MCF 10A (cell line): ENCODE measurements at regions of chr5 and their contacts with region 1.

Region 1: GRCh38 chr5:176415952-176416924 is at the start of gene CLTB:
- DNase-seq: peak; percentile 91
- H3K4me3 Mint-ChIP-seq: peak within 1 kb of the TSS; percentile 83
- H3K27ac Mint-ChIP-seq: peak within 1 kb of the TSS; percentile 73
- H3K4me1 Mint-ChIP-seq: peaks cover 51% of the 10 kb centered on the region
- H3K27me3 Mint-ChIP-seq: no peaks in the 10 kb centered on the region
- CTCF ChIP-seq: peak; percentile 90
- total RNA-seq, gene CLTB: 333 and 339 TPM in 2 replicates

Region 2: DNA sequence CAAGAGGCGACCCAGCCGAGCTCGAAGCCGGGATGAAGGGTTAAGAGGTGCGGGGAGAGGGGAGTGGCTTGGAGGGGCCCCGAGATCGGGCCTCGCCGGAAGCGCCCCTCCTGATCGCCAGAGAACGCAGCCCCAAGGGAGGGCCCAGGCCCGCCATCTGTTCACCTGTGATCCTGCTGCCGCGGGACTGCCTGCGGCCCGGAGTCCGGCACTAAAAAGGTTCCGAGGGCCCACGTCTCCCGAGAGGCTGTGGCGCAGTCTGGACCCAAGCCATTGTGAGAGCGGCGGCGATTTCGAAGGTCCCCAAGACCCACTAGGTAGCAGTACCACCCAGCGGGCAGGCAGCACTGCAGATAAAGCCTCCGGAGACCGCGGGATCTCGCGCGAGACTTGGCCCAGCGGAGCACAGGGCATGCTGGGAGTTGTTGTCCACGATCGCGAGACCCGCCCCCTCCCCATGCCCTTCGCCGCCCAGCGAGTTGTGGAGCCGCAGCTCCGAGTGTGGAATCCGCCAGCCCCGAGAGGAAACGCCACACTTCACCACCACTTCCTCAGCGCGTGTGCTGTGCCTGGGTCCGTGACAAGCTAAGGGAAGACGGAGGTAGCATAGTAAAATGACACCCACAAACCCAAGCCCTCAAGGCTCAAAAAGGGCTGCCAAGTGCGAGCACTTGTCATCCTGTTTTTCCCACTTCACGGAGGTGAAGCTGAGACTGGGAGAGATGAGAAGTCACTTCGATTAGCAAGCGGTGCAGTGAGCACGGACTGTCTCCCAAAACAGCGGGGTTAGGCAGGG is 54.6 kb before region 1 on chr5 and contains the start of gene KIAA1191:
- CTCF ChIA-PET with region 1: interaction called, 3 read pairs
- POLR2A ChIA-PET with region 1: interaction called, 4 read pairs
- intact Hi-C with region 1: loop called (anchors 2 kb)
- DNase-seq: peak; percentile 94
- H3K4me3 Mint-ChIP-seq: peak within 1 kb of the TSS; percentile 98
- H3K27ac Mint-ChIP-seq: peak within 1 kb of the TSS; percentile 97
- H3K4me1 Mint-ChIP-seq: peaks cover 18% of the 10 kb centered on the region
- H3K27me3 Mint-ChIP-seq: no peaks in the 10 kb centered on the region
- CTCF ChIP-seq: peak; percentile 25
- total RNA-seq, gene KIAA1191: 83.8 and 92.0 TPM in 2 replicates

Region 3: DNA sequence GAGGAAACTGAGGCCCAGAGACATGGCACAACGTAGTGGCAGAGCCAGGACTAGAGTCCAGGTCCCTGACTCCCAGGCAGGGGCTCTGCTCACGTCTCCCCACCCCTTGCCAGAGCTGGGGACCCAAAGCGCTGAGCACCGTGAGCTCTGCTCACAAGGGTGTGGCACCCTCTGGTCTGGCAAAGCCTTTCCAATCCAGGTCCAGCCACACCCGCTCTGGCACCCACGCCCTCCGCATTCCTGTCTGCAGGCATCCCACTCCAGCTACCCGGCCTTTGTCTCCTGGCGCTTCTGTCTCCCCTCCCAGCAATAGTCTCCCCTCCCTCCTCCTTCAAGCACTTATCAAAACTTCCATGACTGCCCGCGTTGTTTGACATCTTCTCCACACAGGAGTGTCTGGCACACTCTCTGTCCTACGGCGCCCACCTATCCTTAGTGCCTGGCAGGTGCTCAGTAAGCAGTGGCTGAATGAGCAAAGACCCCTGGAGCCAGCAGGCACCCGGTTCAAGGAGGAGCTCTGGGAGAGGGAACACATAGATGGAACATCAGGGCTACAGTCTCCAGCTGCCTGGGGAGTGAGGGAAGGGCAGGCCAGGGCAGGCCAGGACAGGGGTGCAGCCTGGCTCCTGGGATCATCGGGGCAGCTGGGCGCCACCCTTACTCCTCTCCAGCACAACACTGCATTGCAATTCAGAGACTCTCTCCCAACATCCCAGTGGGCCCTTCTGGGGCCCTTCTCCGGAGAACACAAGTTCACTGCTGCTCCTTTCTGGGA is 15.7 kb before region 1 on chr5:
- CTCF ChIA-PET with region 1: interaction called, 6 read pairs
- POLR2A ChIA-PET with region 1: interaction called, 31 read pairs
- intact Hi-C with region 1: no loop called
- DNase-seq: peak; percentile 48
- H3K4me3 Mint-ChIP-seq: peak overlapping the region; percentile 38
- H3K27ac Mint-ChIP-seq: peak overlapping the region; percentile 78
- H3K4me1 Mint-ChIP-seq: peaks cover 29% of the 10 kb centered on the region
- H3K27me3 Mint-ChIP-seq: no peaks in the 10 kb centered on the region
- CTCF ChIP-seq: no peak

Region 4: DNA sequence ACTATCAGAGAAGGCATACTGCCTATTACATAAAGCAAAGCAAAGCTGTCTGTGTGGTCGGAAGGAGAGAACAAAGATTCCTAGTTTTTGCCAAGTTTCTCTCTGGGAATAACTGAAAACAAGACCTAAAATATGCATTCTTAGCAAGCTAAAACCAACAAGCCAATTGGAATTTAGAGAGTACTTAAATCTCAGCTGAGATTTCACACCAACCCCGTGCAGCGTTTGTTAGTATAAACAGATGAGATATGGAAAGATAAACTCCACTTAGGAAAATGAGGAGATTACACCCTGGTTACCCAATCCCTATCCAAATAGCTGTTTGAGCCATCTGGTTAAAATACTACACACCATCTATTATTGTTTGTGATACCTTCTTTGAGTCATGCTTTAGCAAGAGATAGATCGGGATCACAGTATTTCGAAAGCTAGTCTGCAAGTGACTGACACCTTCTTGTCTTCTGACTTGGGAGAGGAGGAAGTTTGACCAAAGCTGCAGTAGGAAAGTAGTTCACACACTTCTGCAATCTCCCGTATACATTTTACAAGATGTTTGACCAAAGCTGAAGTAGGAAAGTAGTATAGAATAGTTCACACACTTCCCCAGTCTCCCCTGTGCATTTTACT is 50.1 kb after region 1 on chr5:
- CTCF ChIA-PET with region 1: interaction called, 4 read pairs
- POLR2A ChIA-PET with region 1: interaction called, 34 read pairs
- intact Hi-C with region 1: no loop called
- DNase-seq: peak; percentile 84
- H3K4me3 Mint-ChIP-seq: peak overlapping the region; percentile 11
- H3K27ac Mint-ChIP-seq: peak overlapping the region; percentile 24
- H3K4me1 Mint-ChIP-seq: peaks cover 35% of the 10 kb centered on the region
- H3K27me3 Mint-ChIP-seq: no peaks in the 10 kb centered on the region
- CTCF ChIP-seq: no peak

Region 5: GRCh38 chr5:176537608-176538504 is 121.6 kb after region 1 on chr5:
- CTCF ChIA-PET with region 1: interaction called, 34 read pairs
- POLR2A ChIA-PET with region 1: interaction called, 134 read pairs
- intact Hi-C with region 1: loop called (anchors 1 kb)
- DNase-seq: peak; percentile 100
- H3K4me3 Mint-ChIP-seq: peak overlapping the region; percentile 91
- H3K27ac Mint-ChIP-seq: peak overlapping the region; percentile 98
- H3K4me1 Mint-ChIP-seq: peaks cover 56% of the 10 kb centered on the region
- H3K27me3 Mint-ChIP-seq: no peaks in the 10 kb centered on the region
- CTCF ChIP-seq: no peak

Region 6: DNA sequence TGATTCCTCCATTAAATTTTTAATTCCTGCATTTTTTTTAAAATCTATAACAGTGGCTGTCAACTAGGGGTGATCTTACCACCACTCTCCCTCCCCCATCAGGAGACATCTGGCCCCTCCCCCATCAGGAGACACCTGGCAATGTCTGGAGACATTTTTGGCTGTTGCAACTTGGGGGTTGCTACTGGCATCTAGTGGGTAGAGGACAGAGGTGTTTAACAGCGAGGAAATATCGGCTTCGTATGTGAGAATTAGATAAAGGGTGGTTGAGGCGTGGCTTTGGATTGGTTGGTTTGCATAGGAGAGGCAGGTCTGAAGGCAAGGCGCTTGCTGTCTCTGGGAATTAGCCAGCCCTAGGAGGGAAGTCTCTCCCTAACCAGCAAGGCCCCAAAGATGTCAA is 143.4 kb after region 1 on chr5:
- CTCF ChIA-PET with region 1: interaction called, 9 read pairs
- POLR2A ChIA-PET with region 1: no interaction called
- intact Hi-C with region 1: loop called (anchors 5 kb)
- DNase-seq: peak; percentile 57
- H3K4me3 Mint-ChIP-seq: no peak overlapping the region
- H3K27ac Mint-ChIP-seq: no peak overlapping the region
- H3K4me1 Mint-ChIP-seq: peaks cover 7% of the 10 kb centered on the region
- H3K27me3 Mint-ChIP-seq: no peaks in the 10 kb centered on the region
- CTCF ChIP-seq: peak; percentile 19

Region 7: DNA sequence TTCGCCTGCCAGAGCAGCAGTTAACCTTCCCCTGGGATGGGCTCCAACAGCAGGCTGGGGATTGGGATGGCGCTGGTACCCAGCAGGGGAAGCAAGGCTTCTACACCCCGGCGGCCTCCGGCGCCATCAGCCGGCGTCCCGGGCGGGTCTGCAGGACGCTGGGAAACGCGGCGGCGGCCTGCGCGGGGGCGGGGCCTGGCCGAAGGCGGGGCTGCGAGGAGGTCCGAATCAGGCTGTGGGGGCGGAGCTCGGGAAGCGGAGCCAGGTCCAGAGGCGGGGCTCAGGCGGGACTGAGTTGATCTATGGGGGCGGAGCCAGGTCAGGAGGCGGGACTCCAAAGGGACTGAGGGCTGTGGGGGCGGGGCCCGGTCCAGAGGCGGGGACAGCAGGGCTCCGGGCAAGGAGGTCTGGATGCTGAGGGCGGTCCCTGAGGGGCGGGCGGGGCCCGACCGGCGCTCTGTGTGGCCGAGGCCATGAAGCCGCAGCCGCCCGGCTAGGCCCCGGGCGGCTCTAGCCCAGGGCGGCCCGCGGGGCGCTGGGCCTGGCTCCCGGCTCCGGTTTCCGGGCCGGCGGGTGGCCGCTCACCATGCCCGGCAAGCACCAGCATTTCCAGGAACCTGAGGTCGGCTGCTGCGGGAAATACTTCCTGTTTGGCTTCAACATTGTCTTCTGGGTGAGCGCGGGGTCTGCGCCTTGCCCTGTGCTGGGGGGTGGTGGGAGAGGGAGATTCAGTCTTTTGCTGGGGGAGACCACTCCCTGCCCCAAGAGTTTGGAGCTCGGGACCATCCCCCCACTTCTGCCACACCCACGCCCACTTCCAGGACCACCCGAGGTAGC is 231.0 kb after region 1 on chr5 and contains the start of gene TSPAN17:
- CTCF ChIA-PET with region 1: interaction called, 3 read pairs
- POLR2A ChIA-PET with region 1: interaction called, 28 read pairs
- intact Hi-C with region 1: loop called (anchors 1 kb)
- DNase-seq: peak; percentile 100
- H3K4me3 Mint-ChIP-seq: peak within 1 kb of the TSS; percentile 80
- H3K27ac Mint-ChIP-seq: peak within 1 kb of the TSS; percentile 76
- H3K4me1 Mint-ChIP-seq: peaks cover 21% of the 10 kb centered on the region
- H3K27me3 Mint-ChIP-seq: no peaks in the 10 kb centered on the region
- CTCF ChIP-seq: peak; percentile 49
- total RNA-seq, gene TSPAN17: 36.7 and 47.5 TPM in 2 replicates